IMR-90 (cell line): ENCODE measurements at regions of chr3 and their contacts with region 1.

Region 1: GRCh38 chr3:176933704-176934103 is 263.6 kb downstream of the TBL1XR1 start:
- DNase-seq: no peak
- ATAC-seq: no peak
- H3K4me3 ChIP-seq: no peak overlapping the region
- H3K27ac ChIP-seq: no peak overlapping the region
- H3K4me1 ChIP-seq: no peaks in the 10 kb centered on the region
- H3K27me3 ChIP-seq: no peaks in the 10 kb centered on the region; the same call in 1 of the 2 replicates
- CTCF ChIP-seq: no peak
- POLR2A ChIP-seq: no peak
- RAD21 ChIP-seq: no peak

Region 2: DNA sequence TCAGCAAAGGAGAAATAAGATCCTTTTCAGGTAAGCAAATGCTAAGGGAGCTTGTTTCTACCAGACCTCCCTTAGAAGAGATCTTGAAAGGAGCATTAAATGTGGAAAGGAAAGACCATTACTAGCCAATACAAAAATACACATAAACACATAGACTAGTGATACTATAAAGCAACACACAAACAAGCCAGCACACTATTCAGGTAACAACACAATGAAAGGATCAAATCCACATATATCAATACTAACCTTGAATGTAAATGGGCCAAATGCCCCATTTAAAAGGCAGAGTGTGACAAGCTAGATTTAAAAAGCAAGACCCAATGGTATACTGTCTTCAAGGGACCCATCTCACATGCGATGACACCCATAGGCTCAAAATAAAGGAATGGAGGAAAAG is 54.0 kb before region 1 on chr3:
- CTCF ChIA-PET with region 1: no interaction called
- POLR2A ChIA-PET with region 1: no interaction called
- dilution Hi-C with region 1: no loop called
- in situ Hi-C with region 1: loop called (anchors 5 kb)
- intact Hi-C with region 1: no loop called
- DNase-seq: no peak
- ATAC-seq: no peak
- H3K4me3 ChIP-seq: no peak overlapping the region
- H3K27ac ChIP-seq: no peak overlapping the region
- H3K4me1 ChIP-seq: no peaks in the 10 kb centered on the region
- H3K27me3 ChIP-seq: peaks cover 4% of the 10 kb centered on the region
- CTCF ChIP-seq: no peak
- POLR2A ChIP-seq: no peak
- RAD21 ChIP-seq: no peak

Region 3: GRCh38 chr3:177220136-177220974 is 286.7 kb after region 1 on chr3:
- CTCF ChIA-PET with region 1: no interaction called
- POLR2A ChIA-PET with region 1: no interaction called
- dilution Hi-C with region 1: no loop called
- in situ Hi-C with region 1: no loop called
- intact Hi-C with region 1: no loop called
- DNase-seq: peak; percentile 22
- ATAC-seq: no peak
- H3K4me3 ChIP-seq: no peak overlapping the region
- H3K27ac ChIP-seq: no peak overlapping the region
- H3K4me1 ChIP-seq: no peaks in the 10 kb centered on the region
- H3K27me3 ChIP-seq: no peaks in the 10 kb centered on the region
- CTCF ChIP-seq: no peak
- POLR2A ChIP-seq: no peak
- RAD21 ChIP-seq: no peak

Region 4: DNA sequence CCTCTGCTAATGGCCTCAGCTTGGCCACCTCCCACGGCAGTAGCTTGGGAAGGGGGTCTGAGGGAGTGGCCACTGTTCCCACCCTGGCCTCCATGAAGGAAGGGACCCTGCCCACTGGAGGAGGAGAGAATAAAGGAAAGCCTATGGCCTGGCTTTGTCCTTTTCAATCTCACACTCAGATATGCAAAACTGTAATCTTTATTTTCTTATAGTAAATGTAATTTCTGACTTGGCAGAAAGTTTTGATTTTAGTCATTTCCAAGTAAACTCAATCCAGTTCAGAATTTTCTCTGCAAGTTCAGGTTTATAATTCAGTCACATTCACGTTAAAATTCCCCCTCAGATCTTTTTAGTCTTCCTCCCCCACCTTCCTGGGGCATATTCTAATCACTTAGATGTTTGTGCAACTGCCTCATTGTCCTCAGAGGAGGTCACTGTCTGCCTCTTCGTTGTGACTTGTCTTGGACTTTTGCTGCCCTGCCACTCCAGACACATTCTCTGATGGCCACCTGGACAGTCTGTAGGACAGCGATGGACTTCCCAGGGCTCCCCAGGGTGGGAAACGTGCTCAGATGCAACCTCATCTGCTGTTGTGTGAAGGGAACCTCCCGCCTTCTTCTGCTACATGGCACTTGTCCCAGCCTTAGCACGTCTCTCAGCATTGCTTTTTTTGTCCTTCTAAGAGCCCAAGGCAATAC is 486.3 kb after region 1 on chr3:
- CTCF ChIA-PET with region 1: no interaction called
- POLR2A ChIA-PET with region 1: no interaction called
- dilution Hi-C with region 1: no loop called
- in situ Hi-C with region 1: no loop called
- intact Hi-C with region 1: no loop called
- DNase-seq: no peak
- ATAC-seq: peak; percentile 14; the same call in 1 of the 2 replicates
- H3K4me3 ChIP-seq: no peak overlapping the region
- H3K27ac ChIP-seq: peak overlapping the region; percentile 17; the same call in 1 of the 2 replicates
- H3K4me1 ChIP-seq: peaks cover 3% of the 10 kb centered on the region
- H3K27me3 ChIP-seq: no peaks in the 10 kb centered on the region
- CTCF ChIP-seq: no peak
- POLR2A ChIP-seq: no peak
- RAD21 ChIP-seq: no peak